Dendritic cell treated with granulocyte-macrophage colony-stimulating factor and Interleukin-4, amounts not matched to agents 40 ng/mL and 50 ng/mL, for 4 days (primary cell): ENCODE measurements at regions of chr11 and their contacts with region 1.

Region 1: GRCh38 chr11:59097113-59097708 is 9.8 kb upstream of the FAM111B start:
- H3K4me3 Mint-ChIP-seq: no peak overlapping the region
- H3K27ac Mint-ChIP-seq: no peak overlapping the region
- H3K4me1 Mint-ChIP-seq: peaks cover 12% of the 10 kb centered on the region
- H3K27me3 Mint-ChIP-seq: peaks cover 3% of the 10 kb centered on the region

Region 2: GRCh38 chr11:59135648-59136461 is 38.6 kb after region 1 on chr11:
- intact Hi-C with region 1: loop called (anchors 1 kb)
- H3K4me3 Mint-ChIP-seq: peak overlapping the region; percentile 66
- H3K27ac Mint-ChIP-seq: no peak overlapping the region
- H3K4me1 Mint-ChIP-seq: peaks cover 6% of the 10 kb centered on the region
- H3K27me3 Mint-ChIP-seq: no peaks in the 10 kb centered on the region

Region 3: GRCh38 chr11:59158206-59159068 is 61.2 kb after region 1 on chr11:
- intact Hi-C with region 1: loop called (anchors 1 kb)
- H3K4me3 Mint-ChIP-seq: no peak overlapping the region
- H3K27ac Mint-ChIP-seq: peak overlapping the region; percentile 18
- H3K4me1 Mint-ChIP-seq: peaks cover 12% of the 10 kb centered on the region
- H3K27me3 Mint-ChIP-seq: peaks cover 2% of the 10 kb centered on the region